ENCODE measurements at regions of chr14 and their contacts with region 1.

Region 1: DNA sequence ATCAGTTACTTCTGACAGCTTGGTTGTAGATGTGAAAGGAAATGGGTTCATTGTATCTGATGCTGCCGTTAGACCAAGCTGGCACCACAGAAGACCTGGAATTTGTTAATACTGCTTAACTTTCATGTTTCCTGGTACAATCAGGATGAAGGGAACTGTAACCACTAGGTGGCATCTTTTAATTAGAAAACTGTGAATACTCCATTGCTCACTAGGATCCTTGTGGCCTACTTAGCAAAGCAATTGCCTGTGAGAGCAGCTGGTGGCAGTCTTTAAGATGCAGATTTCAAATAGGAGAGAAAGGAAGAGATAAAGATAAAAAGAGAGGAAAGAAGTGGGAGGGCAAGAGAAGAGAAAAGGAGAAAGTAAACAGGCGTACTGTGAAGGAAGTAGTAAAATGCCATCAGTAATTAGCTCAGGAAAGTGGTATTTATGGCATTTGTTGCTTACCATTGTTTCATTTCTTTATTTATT is 114.5 kb downstream of the RAD51B start:
- DNase-seq: peak; percentile 39 to 66 (median 52)
- H3K4me3 ChIP-seq: no peak overlapping the region
- H3K4me3 Mint-ChIP-seq: no peak overlapping the region
- H3K27ac ChIP-seq: no peak overlapping the region
- H3K27ac Mint-ChIP-seq: peak overlapping the region in 3 of 7 donors; percentile 9 to 82 (median 66)
- H3K4me1 ChIP-seq: peaks cover 0 to 6% of the 10 kb centered on the region in 2 donors
- H3K4me1 Mint-ChIP-seq: peaks cover 19% of the 10 kb centered on the region
- H3K27me3 ChIP-seq: no peaks in the 10 kb centered on the region
- H3K27me3 Mint-ChIP-seq: no peaks in the 10 kb centered on the region
- CTCF ChIP-seq: peak; percentile 76

Region 2: GRCh38 chr14:67837011-67837624 is 96.9 kb before region 1 on chr14:
- intact Hi-C with region 1: loop called (anchors 10 kb)
- DNase-seq: peak; percentile 71 to 77 (median 75)
- H3K4me3 ChIP-seq: no peak overlapping the region
- H3K4me3 Mint-ChIP-seq: no peak overlapping the region
- H3K27ac ChIP-seq: no peak overlapping the region
- H3K27ac Mint-ChIP-seq: peak overlapping the region in 5 of 7 donors; percentile 14 to 66 (median 42)
- H3K4me1 ChIP-seq: peaks cover 0 to 9% of the 10 kb centered on the region in 2 donors
- H3K4me1 Mint-ChIP-seq: peaks cover 5% of the 10 kb centered on the region
- H3K27me3 ChIP-seq: no peaks in the 10 kb centered on the region
- H3K27me3 Mint-ChIP-seq: peaks cover 0 to 2% (median 0%) of the 10 kb centered on the region in 3 donors
- CTCF ChIP-seq: peak; percentile 73

Region 3: GRCh38 chr14:67846029-67846610 is 87.9 kb before region 1 on chr14:
- intact Hi-C with region 1: loop called in 1 of 2 experiments (anchors 10 kb)
- DNase-seq: no peak
- H3K4me3 ChIP-seq: no peak overlapping the region
- H3K4me3 Mint-ChIP-seq: no peak overlapping the region
- H3K27ac ChIP-seq: no peak overlapping the region
- H3K27ac Mint-ChIP-seq: no peak overlapping the region
- H3K4me1 ChIP-seq: peaks cover 9 to 12% of the 10 kb centered on the region in 2 donors
- H3K4me1 Mint-ChIP-seq: peaks cover 14% of the 10 kb centered on the region
- H3K27me3 ChIP-seq: no peaks in the 10 kb centered on the region
- H3K27me3 Mint-ChIP-seq: peaks cover 0 to 3% (median 1%) of the 10 kb centered on the region in 3 donors
- CTCF ChIP-seq: no peak

Region 4: GRCh38 chr14:68143341-68143841 is 209.3 kb after region 1 on chr14:
- intact Hi-C with region 1: no loop called
- DNase-seq: no peak
- H3K4me3 ChIP-seq: no peak overlapping the region
- H3K4me3 Mint-ChIP-seq: no peak overlapping the region
- H3K27ac ChIP-seq: no peak overlapping the region
- H3K27ac Mint-ChIP-seq: no peak overlapping the region
- H3K4me1 ChIP-seq: no peaks in the 10 kb centered on the region
- H3K4me1 Mint-ChIP-seq: peaks cover 11% of the 10 kb centered on the region
- H3K27me3 ChIP-seq: no peaks in the 10 kb centered on the region
- H3K27me3 Mint-ChIP-seq: no peaks in the 10 kb centered on the region
- CTCF ChIP-seq: no peak

Measured in CD14-positive monocyte (primary cell).